ENCODE measurements at regions of chr11 and their contacts with region 1.

Region 1: GRCh38 chr11:46332568-46333393 is 14.5 kb upstream of the DGKZ start:
- DNase-seq: peak in 4 of 5 donors; percentile 30 to 59 (median 44)
- H3K4me3 ChIP-seq: peak overlapping the region; percentile 15 to 54
- H3K4me3 Mint-ChIP-seq: peak overlapping the region; percentile 87 to 96 (median 90)
- H3K27ac ChIP-seq: peak overlapping the region; percentile 42
- H3K27ac Mint-ChIP-seq: peak overlapping the region in 6 of 7 donors; percentile 84 to 98 (median 96)
- H3K4me1 ChIP-seq: peaks cover 74% of the 10 kb centered on the region
- H3K4me1 Mint-ChIP-seq: peaks cover 33 to 74% (median 61%) of the 10 kb centered on the region in 4 donors
- H3K27me3 ChIP-seq: no peaks in the 10 kb centered on the region
- H3K27me3 Mint-ChIP-seq: no peaks in the 10 kb centered on the region

Region 2: GRCh38 chr11:46100670-46101069 is 232.1 kb before region 1 on chr11:
- CTCF ChIA-PET with region 1: no interaction called
- POLR2A ChIA-PET with region 1: no interaction called
- intact Hi-C with region 1: no loop called
- DNase-seq: no peak
- H3K4me3 ChIP-seq: no peak overlapping the region
- H3K4me3 Mint-ChIP-seq: peak overlapping the region; percentile 1 to 91 (median 66)
- H3K27ac ChIP-seq: peak overlapping the region; percentile 11
- H3K27ac Mint-ChIP-seq: peak overlapping the region in 6 of 7 donors; percentile 6 to 78 (median 64)
- H3K4me1 ChIP-seq: peaks cover 34% of the 10 kb centered on the region
- H3K4me1 Mint-ChIP-seq: peaks cover 48 to 80% (median 62%) of the 10 kb centered on the region in 4 donors
- H3K27me3 ChIP-seq: no peaks in the 10 kb centered on the region
- H3K27me3 Mint-ChIP-seq: no peaks in the 10 kb centered on the region

Region 3: DNA sequence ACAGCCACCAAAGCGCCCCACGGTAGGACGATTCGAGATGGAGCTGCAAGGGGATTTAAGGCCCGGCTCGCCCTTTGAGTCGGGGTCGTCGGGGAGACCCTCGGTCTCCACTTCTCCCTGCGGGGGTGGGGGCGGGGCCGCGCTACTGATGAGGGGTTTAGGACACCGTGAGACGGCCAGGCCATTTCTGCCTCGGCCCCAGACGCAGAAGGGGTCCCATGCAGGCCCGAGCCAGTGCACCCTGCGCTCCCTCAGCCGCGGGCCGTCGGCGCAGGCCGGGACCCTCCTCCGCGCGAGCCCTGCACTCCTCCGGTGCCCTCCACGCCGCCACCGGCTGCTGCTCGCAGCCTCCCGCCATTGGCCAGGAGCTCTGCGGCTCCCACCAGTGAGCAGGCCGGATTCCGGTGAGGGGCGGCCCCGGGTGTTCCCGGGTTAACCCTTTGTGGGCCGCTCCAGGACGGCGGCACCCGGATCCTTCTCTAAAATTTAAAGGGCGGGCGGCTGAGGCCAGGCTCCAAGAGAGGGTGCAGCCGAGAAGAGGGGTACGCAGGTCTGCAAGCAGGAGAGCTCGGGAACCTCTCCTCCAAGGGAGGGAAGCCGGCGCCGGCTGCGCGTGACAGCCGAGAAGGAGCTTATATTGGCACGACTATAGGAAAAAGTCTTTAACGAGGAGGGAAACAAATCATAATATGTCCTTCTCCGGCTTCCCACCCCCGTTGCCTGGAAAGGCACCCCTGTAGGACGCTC is 37.3 kb before region 1 on chr11:
- CTCF ChIA-PET with region 1: interaction called, 6 read pairs
- POLR2A ChIA-PET with region 1: interaction called, 3 read pairs
- intact Hi-C with region 1: loop called (anchors 5 kb)
- DNase-seq: peak; percentile 73 to 79 (median 75)
- H3K4me3 ChIP-seq: peak overlapping the region; percentile 5 to 64
- H3K4me3 Mint-ChIP-seq: peak overlapping the region; percentile 80 to 93 (median 86)
- H3K27ac ChIP-seq: no peak overlapping the region
- H3K27ac Mint-ChIP-seq: peak overlapping the region in 1 of 7 donors; percentile 72
- H3K4me1 ChIP-seq: peaks cover 10% of the 10 kb centered on the region
- H3K4me1 Mint-ChIP-seq: peaks cover 3 to 11% (median 5%) of the 10 kb centered on the region in 4 donors
- H3K27me3 ChIP-seq: peaks cover 7% of the 10 kb centered on the region
- H3K27me3 Mint-ChIP-seq: peaks cover 2 to 7% of the 10 kb centered on the region in 2 donors

Region 4: GRCh38 chr11:46413757-46414465 is 81.1 kb after region 1 on chr11:
- CTCF ChIA-PET with region 1: no interaction called
- POLR2A ChIA-PET with region 1: no interaction called
- intact Hi-C with region 1: no loop called
- DNase-seq: no peak
- H3K4me3 ChIP-seq: no peak overlapping the region
- H3K4me3 Mint-ChIP-seq: no peak overlapping the region
- H3K27ac ChIP-seq: no peak overlapping the region
- H3K27ac Mint-ChIP-seq: no peak overlapping the region
- H3K4me1 ChIP-seq: no peaks in the 10 kb centered on the region
- H3K4me1 Mint-ChIP-seq: no peaks in the 10 kb centered on the region
- H3K27me3 ChIP-seq: no peaks in the 10 kb centered on the region
- H3K27me3 Mint-ChIP-seq: no peaks in the 10 kb centered on the region

Region 5: DNA sequence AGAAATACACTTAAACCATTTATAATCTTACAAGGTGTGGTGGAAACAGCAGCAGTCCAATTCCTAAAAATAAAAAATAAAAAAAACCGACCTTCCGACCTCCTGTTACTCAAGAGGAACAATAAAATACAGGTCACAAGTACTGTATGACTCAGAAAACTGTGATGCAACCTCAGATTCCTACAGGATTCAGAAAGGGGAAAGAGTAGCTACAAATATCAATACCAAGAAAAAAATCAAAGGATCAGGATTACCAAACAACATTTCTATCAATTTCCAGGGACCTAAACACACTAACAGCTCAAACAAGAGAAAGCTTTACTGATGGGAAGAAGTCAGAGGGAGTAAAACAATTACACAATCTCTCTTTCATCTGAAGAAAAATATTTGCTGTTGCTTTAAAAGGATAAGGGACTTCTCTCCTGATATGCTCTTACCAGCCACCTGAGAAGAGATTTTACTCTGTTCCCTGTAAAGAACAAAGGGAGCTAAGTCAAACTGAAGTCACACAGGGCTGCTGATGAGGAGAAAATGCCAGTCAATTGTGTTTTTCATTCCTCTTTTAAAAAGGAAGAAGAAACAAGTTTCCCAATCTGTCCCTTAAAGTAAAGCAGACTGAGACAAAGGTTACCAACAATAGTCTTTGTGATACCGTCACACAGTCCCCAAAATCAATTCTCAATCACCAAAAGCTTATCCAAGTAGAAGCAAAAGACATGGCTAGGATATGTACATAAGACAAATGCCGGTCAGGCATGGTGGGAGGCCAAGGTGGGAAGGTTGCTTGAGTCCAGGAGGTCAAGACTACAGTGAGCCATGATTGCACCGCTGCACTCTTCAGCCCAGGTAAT is 221.6 kb after region 1 on chr11:
- CTCF ChIA-PET with region 1: no interaction called
- POLR2A ChIA-PET with region 1: no interaction called
- intact Hi-C with region 1: no loop called
- DNase-seq: no peak
- H3K4me3 ChIP-seq: no peak overlapping the region
- H3K4me3 Mint-ChIP-seq: peak overlapping the region; percentile 20 to 77 (median 36)
- H3K27ac ChIP-seq: no peak overlapping the region
- H3K27ac Mint-ChIP-seq: peak overlapping the region; percentile 64 to 92 (median 77)
- H3K4me1 ChIP-seq: peaks cover 55% of the 10 kb centered on the region
- H3K4me1 Mint-ChIP-seq: peaks cover 47 to 68% (median 58%) of the 10 kb centered on the region in 4 donors
- H3K27me3 ChIP-seq: no peaks in the 10 kb centered on the region
- H3K27me3 Mint-ChIP-seq: no peaks in the 10 kb centered on the region

Measured in CD4-positive, alpha-beta memory T cell (primary cell).